Right cardiac atrium (tissue), 5 donors: ENCODE measurements at regions of chr21 and their contacts with region 1.

Region 1: DNA sequence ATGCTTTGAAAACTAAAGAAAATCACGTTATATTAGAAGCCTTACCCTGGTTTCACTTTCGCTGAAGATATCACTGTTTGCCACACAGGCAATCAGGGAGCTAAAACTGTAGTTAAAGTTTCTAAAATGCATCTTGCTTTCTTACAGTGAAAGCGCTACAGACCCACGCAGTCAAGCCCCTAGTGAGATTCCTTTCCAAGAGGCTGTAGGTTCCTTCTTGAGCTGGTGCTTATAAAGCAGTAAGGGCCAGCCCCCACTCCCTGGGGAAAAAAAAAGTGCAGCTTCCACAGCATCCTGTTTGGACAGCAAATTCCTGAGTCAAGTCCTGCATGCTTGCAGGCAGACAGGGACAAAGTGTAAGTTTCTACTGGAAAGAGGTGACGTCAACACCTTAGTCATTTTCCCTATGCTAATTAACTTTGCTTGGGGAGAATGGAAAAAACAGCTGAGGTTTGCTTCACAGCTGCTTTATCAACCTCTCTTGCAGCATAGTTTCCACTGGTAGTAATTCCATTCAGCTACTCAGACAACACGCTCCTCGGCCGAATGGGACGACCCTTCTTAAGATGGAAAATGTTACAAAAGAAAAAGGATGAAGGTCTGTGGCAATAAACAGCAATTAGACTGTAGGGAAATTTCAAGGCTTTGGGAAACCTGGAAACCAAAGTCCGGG is 14.7 kb upstream of the KCNE1 start:
- DNase-seq: peak; percentile 75 to 89 (median 79)
- ATAC-seq: peak; percentile 91 to 96
- H3K4me3 ChIP-seq: peak overlapping the region; percentile 78
- H3K27ac ChIP-seq: peak overlapping the region; percentile 98
- H3K4me1 ChIP-seq: peaks cover 9% of the 10 kb centered on the region
- H3K27me3 ChIP-seq: no peaks in the 10 kb centered on the region

Region 2: GRCh38 chr21:34187935-34188334 is 338.8 kb before region 1 on chr21:
- intact Hi-C with region 1: no loop called
- DNase-seq: peak; percentile 56 to 78 (median 68)
- ATAC-seq: peak; percentile 60 to 78
- H3K4me3 ChIP-seq: no peak overlapping the region
- H3K27ac ChIP-seq: no peak overlapping the region
- H3K4me1 ChIP-seq: peaks cover 5% of the 10 kb centered on the region
- H3K27me3 ChIP-seq: no peaks in the 10 kb centered on the region

Region 3: GRCh38 chr21:34582506-34583150 is 55.9 kb after region 1 on chr21:
- intact Hi-C with region 1: loop called in 1 of 4 experiments (anchors 5 kb)
- DNase-seq: peak in 1 of 3 donors; percentile 68
- ATAC-seq: peak; percentile 70 to 84
- H3K4me3 ChIP-seq: no peak overlapping the region
- H3K27ac ChIP-seq: peak overlapping the region; percentile 95
- H3K4me1 ChIP-seq: peaks cover 19% of the 10 kb centered on the region
- H3K27me3 ChIP-seq: no peaks in the 10 kb centered on the region

Region 4: DNA sequence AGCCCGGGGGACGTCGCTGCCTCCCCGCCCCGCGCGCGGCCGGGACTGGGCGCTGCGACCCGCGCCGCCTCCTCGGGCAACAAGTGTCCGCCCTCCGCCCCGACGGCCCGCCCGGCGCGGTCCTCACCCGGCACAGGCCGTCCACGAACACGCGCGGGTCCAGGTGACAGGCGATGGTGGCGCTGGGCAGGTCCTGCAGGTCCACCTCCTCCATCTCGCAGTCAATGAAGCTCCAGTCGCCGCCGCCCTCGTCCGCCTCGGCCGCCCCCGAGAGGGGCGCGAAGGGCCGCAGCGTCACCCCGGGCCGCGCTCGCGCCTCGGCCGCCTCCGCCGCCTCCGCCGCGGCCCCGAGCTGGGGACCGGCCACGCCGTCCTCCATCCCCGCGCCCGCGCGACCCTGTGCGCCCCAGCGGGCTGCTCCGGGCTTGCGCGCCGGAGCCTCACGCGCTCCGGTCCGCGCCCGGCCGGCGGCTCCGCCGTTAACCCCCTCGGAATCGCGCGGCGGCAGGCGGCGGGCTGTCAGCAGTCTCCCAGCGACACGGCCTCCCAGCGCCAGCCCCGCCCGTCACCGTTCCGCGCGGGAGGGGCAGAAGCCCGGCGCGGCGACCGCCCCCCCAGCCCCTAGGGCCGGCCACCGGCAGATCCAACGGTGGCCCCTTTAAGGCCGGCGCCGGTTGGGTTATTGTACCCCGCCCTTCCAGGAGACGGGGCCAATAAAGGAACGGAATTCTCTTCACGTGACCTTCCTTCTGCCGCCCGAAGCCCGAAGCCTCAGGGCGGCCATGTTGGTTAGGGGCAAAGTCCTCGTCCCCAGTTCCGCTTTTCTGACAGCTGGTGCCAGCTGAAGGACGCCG is 88.1 kb after region 1 on chr21 and contains the start of gene RCAN1:
- intact Hi-C with region 1: loop called in 1 of 4 experiments (anchors 5 kb)
- DNase-seq: peak; percentile 92 to 95 (median 94)
- ATAC-seq: peak; percentile 98 to 99
- H3K4me3 ChIP-seq: peak within 1 kb of the TSS; percentile 69
- H3K27ac ChIP-seq: peak within 1 kb of the TSS; percentile 88
- H3K4me1 ChIP-seq: peaks cover 7% of the 10 kb centered on the region
- H3K27me3 ChIP-seq: no peaks in the 10 kb centered on the region
- total RNA-seq, gene RCAN1: 26.7 to 39.7 (median 30.7) TPM